ENCODE measurements at regions of chr4 and their contacts with region 1.

Region 1: DNA sequence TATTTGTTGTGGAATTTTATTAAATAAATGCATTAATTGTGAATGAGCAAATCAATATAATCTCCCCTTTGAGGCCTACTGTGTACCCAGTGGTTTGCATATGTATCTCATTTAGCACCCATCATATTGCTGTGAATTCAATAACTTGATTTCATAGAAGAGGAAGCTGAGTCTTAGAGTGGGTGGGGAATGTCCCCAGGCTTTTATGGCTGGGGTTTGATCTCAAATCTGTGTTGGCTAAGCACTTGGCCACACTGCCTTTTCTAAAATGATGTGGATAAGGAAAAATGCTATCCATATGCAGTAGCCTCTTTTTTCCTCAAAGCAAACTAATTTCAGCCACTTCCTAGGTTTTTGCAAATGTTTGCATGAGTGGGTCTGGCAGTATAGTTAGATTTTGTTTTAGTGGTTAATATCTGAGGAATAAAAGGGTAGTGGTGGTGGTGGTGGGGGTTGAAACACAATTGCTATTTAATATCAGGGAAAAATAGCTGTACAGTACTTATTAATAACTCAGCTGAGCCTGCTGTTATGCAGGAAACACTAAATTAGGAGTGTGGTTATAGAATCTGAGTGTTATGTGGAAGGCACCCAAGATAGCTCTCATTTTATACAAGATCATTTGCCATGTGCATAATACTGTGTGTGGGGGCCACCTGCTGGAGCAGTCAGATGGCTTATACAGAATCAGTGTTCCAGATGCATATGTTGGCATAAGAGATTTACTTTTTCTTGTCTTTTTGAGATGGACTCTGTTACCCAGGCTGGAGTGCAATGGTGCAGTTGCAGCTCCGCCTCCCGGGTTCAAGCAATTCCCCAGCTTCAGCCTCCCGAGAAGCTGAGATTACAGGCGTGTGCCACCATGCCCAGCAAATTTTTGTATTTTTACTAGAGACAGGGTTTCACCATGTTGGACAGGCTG is 108.0 kb downstream of the TMEM131L start:
- DNase-seq: peak; percentile 78
- H3K4me3 Mint-ChIP-seq: no peak overlapping the region
- H3K27ac Mint-ChIP-seq: peak overlapping the region; percentile 65
- H3K4me1 Mint-ChIP-seq: peaks cover 69% of the 10 kb centered on the region
- H3K27me3 Mint-ChIP-seq: no peaks in the 10 kb centered on the region

Region 2: DNA sequence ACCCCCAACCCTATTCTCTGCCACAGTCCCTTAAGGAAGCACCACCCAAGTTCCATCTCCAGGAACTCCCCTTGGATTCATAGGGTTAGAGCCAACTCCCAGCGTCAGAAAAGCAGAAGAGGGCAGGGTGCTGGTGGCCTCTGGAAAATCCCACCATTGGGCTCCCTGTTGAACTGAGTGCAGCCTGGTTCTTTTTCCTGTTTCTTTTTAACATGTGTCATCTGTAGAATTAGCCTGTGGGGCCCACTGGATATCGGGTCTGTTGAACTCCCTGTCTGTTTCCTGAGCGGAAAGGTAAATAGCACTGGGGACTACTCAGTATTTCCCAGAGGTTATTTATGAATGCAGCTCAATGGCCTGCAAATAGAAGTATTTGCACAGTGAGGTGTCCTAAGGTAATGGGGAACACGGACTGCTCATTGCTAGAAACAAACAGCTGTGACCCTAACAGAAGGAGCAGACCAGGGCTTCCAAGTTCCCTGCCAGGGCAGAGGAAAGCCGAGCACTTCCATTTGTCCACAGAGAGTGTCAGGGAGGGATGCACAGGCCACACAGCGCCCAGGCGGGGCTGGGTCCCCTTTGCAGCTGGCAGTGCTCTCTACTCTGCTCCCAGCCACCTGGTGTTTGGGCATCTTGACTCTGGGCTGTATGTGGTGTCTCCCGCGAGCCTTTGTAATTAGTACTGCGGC is 535.4 kb before region 1 on chr4:
- CTCF ChIA-PET with region 1: no interaction called
- POLR2A ChIA-PET with region 1: no interaction called
- DNase-seq: no peak
- H3K4me3 Mint-ChIP-seq: no peak overlapping the region
- H3K27ac Mint-ChIP-seq: no peak overlapping the region
- H3K4me1 Mint-ChIP-seq: no peaks in the 10 kb centered on the region
- H3K27me3 Mint-ChIP-seq: peaks cover 22% of the 10 kb centered on the region

Region 3: GRCh38 chr4:153420361-153420760 is 153.8 kb before region 1 on chr4:
- CTCF ChIA-PET with region 1: no interaction called
- POLR2A ChIA-PET with region 1: no interaction called
- DNase-seq: no peak
- H3K4me3 Mint-ChIP-seq: no peak overlapping the region
- H3K27ac Mint-ChIP-seq: no peak overlapping the region
- H3K4me1 Mint-ChIP-seq: peaks cover 49% of the 10 kb centered on the region
- H3K27me3 Mint-ChIP-seq: no peaks in the 10 kb centered on the region

Region 4: GRCh38 chr4:153448003-153448731 is 126.0 kb before region 1 on chr4:
- CTCF ChIA-PET with region 1: interaction called, 12 read pairs
- POLR2A ChIA-PET with region 1: no interaction called
- DNase-seq: no peak
- H3K4me3 Mint-ChIP-seq: no peak overlapping the region
- H3K27ac Mint-ChIP-seq: no peak overlapping the region
- H3K4me1 Mint-ChIP-seq: peaks cover 32% of the 10 kb centered on the region
- H3K27me3 Mint-ChIP-seq: no peaks in the 10 kb centered on the region